ENCODE measurements at regions of chr13 and their contacts with region 1.

Region 1: DNA sequence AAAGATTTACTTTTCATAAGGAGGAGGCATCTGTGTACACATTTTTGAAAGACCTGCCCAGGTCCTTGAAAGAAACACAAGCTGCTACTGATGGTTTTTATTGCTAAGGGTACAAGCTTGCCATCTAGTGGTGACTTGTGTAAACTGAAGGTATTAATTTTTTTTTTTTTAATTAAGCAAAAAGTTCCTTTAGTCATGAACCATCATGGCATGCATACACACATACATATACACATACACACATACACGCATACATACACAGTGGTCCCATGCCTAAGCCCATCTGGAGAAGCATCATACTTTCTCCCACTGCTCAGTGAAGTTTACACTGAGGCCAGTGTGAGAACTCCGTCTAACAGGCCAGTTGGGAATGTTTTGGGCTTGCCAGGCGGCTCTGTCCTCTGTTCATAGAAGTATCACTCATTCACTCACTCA is 312.5 kb downstream of the DCLK1 start:
- DNase-seq: peak; percentile 43
- H3K4me3 ChIP-seq: no peak overlapping the region
- H3K27ac ChIP-seq: no peak overlapping the region
- H3K4me1 ChIP-seq: no peaks in the 10 kb centered on the region
- H3K27me3 ChIP-seq: no peaks in the 10 kb centered on the region
- CTCF ChIP-seq: peak; percentile 38 to 50
- POLR2A ChIP-seq: no peak

Region 2: GRCh38 chr13:35210261-35210660 is 608.4 kb before region 1 on chr13:
- CTCF ChIA-PET with region 1: interaction called, 8 read pairs
- POLR2A ChIA-PET with region 1: no interaction called
- dilution Hi-C with region 1: no loop called
- intact Hi-C with region 1: loop called (anchors 10 kb)
- DNase-seq: peak; percentile 34
- H3K4me3 ChIP-seq: no peak overlapping the region
- H3K27ac ChIP-seq: no peak overlapping the region
- H3K4me1 ChIP-seq: no peaks in the 10 kb centered on the region
- H3K27me3 ChIP-seq: no peaks in the 10 kb centered on the region
- CTCF ChIP-seq: no peak
- POLR2A ChIP-seq: no peak

Region 3: DNA sequence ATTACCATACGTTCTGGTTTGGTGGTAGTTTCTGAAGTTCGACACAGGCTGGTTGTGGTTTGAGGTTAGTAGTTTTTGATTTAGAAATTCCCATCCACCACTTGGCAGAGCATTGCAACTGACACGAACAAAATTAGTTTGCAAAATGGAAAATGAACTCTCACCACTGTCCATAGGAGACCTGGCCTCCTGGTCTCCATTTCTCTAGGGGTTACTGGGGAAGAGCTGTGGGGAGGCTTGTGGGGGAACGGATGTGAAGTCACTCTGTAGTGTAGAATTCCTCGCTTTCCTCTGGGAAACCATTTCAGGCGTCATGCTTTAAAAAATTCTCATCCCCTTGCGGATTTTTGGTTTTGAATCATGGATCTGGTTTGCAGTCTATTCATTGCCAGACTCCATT is 20.7 kb before region 1 on chr13:
- CTCF ChIA-PET with region 1: interaction called, 17 read pairs
- POLR2A ChIA-PET with region 1: no interaction called
- dilution Hi-C with region 1: no loop called
- intact Hi-C with region 1: no loop called
- DNase-seq: no peak
- H3K4me3 ChIP-seq: no peak overlapping the region
- H3K27ac ChIP-seq: no peak overlapping the region
- H3K4me1 ChIP-seq: no peaks in the 10 kb centered on the region
- H3K27me3 ChIP-seq: peaks cover 0 to 5% of the 10 kb centered on the region in 2 experiments
- CTCF ChIP-seq: no peak
- POLR2A ChIP-seq: no peak

Region 4: GRCh38 chr13:35830850-35831450 is 12.3 kb after region 1 on chr13:
- CTCF ChIA-PET with region 1: interaction called, 13 read pairs
- POLR2A ChIA-PET with region 1: no interaction called
- dilution Hi-C with region 1: no loop called
- intact Hi-C with region 1: no loop called
- DNase-seq: no peak
- H3K4me3 ChIP-seq: no peak overlapping the region
- H3K27ac ChIP-seq: no peak overlapping the region
- H3K4me1 ChIP-seq: no peaks in the 10 kb centered on the region
- H3K27me3 ChIP-seq: no peaks in the 10 kb centered on the region
- CTCF ChIP-seq: no peak
- POLR2A ChIP-seq: no peak

Region 5: GRCh38 chr13:35855531-35856019 is 36.9 kb after region 1 on chr13:
- CTCF ChIA-PET with region 1: interaction called, 12 read pairs
- POLR2A ChIA-PET with region 1: no interaction called
- dilution Hi-C with region 1: no loop called
- intact Hi-C with region 1: no loop called
- DNase-seq: no peak
- H3K4me3 ChIP-seq: no peak overlapping the region
- H3K27ac ChIP-seq: no peak overlapping the region
- H3K4me1 ChIP-seq: peaks cover 8% of the 10 kb centered on the region
- H3K27me3 ChIP-seq: no peaks in the 10 kb centered on the region
- CTCF ChIP-seq: no peak
- POLR2A ChIP-seq: no peak

Region 6: DNA sequence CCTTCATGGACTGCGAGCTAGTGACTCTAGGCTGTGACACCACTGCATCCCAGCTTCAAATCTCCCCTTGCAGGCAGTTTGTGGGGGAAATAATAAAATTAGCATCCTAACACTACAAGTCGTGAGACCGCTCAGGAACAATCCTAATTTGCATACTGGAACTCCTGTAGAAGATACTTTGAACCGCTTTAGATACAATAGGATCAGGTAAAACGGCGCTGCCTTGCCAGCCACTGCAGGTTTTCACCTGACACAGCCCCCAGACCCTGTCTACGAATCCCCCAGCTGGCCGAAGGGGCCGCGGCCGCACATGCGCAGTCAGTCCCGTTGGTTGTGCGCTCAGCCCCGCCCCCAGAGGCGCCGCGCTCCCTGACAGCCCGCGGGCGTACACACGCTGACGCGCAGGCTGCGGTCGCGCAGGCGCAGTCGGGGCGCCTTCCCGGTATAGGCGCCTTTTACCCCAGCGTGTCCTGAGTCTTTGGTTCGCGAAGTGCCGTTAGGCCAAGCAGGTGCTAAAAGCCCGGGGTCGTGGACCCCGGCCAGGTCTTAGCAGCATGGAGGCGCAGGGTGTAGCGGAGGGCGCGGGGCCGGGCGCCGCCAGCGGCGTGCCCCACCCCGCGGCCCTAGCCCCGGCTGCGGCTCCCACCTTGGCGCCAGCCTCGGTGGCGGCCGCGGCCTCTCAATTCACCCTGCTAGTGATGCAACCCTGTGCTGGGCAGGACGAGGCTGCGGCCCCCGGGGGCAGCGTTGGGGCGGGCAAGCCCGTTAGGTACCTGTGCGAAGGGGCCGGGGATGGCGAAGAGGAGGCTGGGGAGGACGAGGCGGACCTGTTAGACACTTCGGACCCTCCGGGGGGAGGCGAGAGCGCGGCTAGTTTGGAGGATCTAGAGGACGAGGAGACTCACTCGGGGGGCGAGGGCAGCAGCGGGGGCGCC is 1000.4 kb after region 1 on chr13 and contains the start of gene RFXAP:
- CTCF ChIA-PET with region 1: no interaction called
- POLR2A ChIA-PET with region 1: no interaction called
- dilution Hi-C with region 1: no loop called
- intact Hi-C with region 1: no loop called
- DNase-seq: peak; percentile 88
- H3K4me3 ChIP-seq: peak within 1 kb of the TSS; percentile 62 to 93 (median 83)
- H3K27ac ChIP-seq: peak within 1 kb of the TSS; percentile 44
- H3K4me1 ChIP-seq: peaks cover 35% of the 10 kb centered on the region
- H3K27me3 ChIP-seq: no peaks in the 10 kb centered on the region
- CTCF ChIP-seq: peak in 1 of 2 donors; percentile 17
- POLR2A ChIP-seq: peak; percentile 48
- total RNA-seq, gene RFXAP: 7.2 and 9.0 TPM in 2 replicates